ENCODE measurements at regions of chr12 and their contacts with region 1.

Region 1: GRCh38 chr12:3727877-3728632 is 24.9 kb downstream of the CRACR2A start:
- DNase-seq: peak; percentile 49
- H3K4me3 Mint-ChIP-seq: peak overlapping the region; percentile 71
- H3K27ac Mint-ChIP-seq: peak overlapping the region; percentile 83
- H3K4me1 Mint-ChIP-seq: peaks cover 33% of the 10 kb centered on the region
- H3K27me3 Mint-ChIP-seq: no peaks in the 10 kb centered on the region

Region 2: DNA sequence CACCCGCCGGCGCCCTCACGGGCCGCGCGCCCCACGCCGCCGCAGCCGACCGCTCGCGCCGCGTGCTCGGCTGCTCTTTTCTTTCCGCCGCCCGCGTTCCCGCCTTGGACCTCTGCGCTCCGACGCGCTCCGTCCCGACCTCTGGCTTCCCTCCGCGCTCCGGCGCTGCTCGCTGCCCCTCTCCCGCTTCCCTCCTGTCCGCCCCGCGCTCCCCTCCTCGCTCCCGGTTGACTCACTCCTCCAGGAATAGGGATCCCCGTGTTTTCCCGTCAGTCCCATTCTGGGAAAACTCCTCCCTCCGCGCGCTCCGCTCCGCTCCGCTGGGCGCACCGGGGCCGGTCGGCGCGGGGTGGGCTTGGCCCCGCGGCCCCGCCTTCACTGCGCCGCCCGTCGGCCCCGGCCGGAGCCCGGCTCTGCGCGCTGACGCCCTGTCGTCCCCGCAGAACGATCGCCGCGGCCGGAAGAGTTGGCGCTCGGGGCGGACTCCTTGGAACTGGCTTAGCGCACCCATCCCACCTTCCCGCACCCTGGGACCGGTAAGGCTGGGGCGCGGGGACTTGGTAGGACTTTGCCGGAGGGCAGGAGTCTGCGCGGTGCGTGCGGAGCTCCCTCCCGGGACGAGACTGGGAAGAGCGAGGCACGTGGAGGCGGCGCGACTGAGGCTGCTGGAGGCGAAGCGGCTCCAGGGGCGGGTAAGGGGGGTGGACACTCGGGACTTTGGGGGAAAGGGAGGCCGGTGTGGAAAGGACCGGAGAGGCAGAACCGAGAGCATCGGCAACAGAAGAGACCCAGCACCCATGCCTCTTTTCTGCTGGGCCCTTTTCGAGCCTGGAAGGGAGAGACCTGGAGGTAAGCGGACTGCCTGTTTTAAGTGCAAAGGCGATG is 768.3 kb before region 1 on chr12:
- intact Hi-C with region 1: no loop called
- DNase-seq: no peak
- H3K4me3 Mint-ChIP-seq: peak overlapping the region; percentile 75
- H3K27ac Mint-ChIP-seq: no peak overlapping the region
- H3K4me1 Mint-ChIP-seq: peaks cover 12% of the 10 kb centered on the region
- H3K27me3 Mint-ChIP-seq: peaks cover 52% of the 10 kb centered on the region

Region 3: GRCh38 chr12:3604748-3605586 is 123.1 kb before region 1 on chr12:
- intact Hi-C with region 1: no loop called
- DNase-seq: no peak
- H3K4me3 Mint-ChIP-seq: no peak overlapping the region
- H3K27ac Mint-ChIP-seq: no peak overlapping the region
- H3K4me1 Mint-ChIP-seq: no peaks in the 10 kb centered on the region
- H3K27me3 Mint-ChIP-seq: peaks cover 27% of the 10 kb centered on the region

Region 4: DNA sequence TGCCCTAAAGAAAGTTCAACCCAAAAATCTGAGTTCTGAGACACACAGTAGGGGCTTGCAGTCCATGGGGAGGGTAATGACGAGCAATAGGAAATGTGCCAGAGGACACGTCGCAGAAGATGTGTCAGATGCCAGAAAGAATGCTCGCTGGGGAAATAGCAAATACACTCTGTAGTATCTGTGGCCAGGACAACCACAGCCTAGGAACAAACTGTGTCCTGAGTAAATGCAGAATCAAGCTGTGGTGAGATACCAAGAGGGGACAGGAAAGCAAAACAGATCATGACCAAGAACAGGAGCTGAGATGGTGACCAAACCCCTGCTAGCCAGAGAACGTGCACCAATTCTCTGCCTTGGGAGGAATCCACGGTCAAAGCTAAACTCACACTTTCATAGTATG is 15.7 kb after region 1 on chr12:
- intact Hi-C with region 1: loop called (anchors 1 kb)
- DNase-seq: no peak
- H3K4me3 Mint-ChIP-seq: peak overlapping the region; percentile 39
- H3K27ac Mint-ChIP-seq: peak overlapping the region; percentile 71
- H3K4me1 Mint-ChIP-seq: peaks cover 32% of the 10 kb centered on the region
- H3K27me3 Mint-ChIP-seq: no peaks in the 10 kb centered on the region

Region 5: GRCh38 chr12:3752741-3753486 is 24.9 kb after region 1 on chr12 and contains the start of gene CRACR2A:
- intact Hi-C with region 1: loop called (anchors 1 kb)
- DNase-seq: peak; percentile 82
- H3K4me3 Mint-ChIP-seq: peak within 1 kb of the TSS; percentile 98
- H3K27ac Mint-ChIP-seq: peak within 1 kb of the TSS; percentile 98
- H3K4me1 Mint-ChIP-seq: peaks cover 43% of the 10 kb centered on the region
- H3K27me3 Mint-ChIP-seq: no peaks in the 10 kb centered on the region
- total RNA-seq, gene CRACR2A: 24.6 and 25.2 TPM in 2 replicates

Region 6: GRCh38 chr12:3827301-3828000 is 99.4 kb after region 1 on chr12:
- intact Hi-C with region 1: no loop called
- DNase-seq: no peak
- H3K4me3 Mint-ChIP-seq: no peak overlapping the region
- H3K27ac Mint-ChIP-seq: no peak overlapping the region
- H3K4me1 Mint-ChIP-seq: no peaks in the 10 kb centered on the region
- H3K27me3 Mint-ChIP-seq: no peaks in the 10 kb centered on the region

Region 7: GRCh38 chr12:3841783-3842182 is 113.7 kb after region 1 on chr12:
- intact Hi-C with region 1: no loop called
- DNase-seq: no peak
- H3K4me3 Mint-ChIP-seq: no peak overlapping the region
- H3K27ac Mint-ChIP-seq: no peak overlapping the region
- H3K4me1 Mint-ChIP-seq: peaks cover 24% of the 10 kb centered on the region
- H3K27me3 Mint-ChIP-seq: no peaks in the 10 kb centered on the region

Measured in activated T-helper 2 cell treated with anti-CD3 and anti-CD28 coated beads, Interferon-gamma antibody, Interleukin-2, Interleukin-4, amounts not matched to agents 10 μg/mL and 5 μg/mL and 100 μg/mL, durations not matched to agents 14 hours and 24 hours and 36 hours (primary cell).